ENCODE measurements at regions of chr3 and their contacts with region 1.

Region 1: GRCh38 chr3:13895155-13896105 is 15.6 kb upstream of the WNT7A start:
- DNase-seq: peak; percentile 69
- ATAC-seq: peak; percentile 98
- H3K4me3 ChIP-seq: peak overlapping the region; percentile 20 to 72 (median 57)
- H3K27ac ChIP-seq: no peak overlapping the region
- H3K4me1 ChIP-seq: peaks cover 10% of the 10 kb centered on the region
- H3K27me3 ChIP-seq: peaks cover 0 to 25% of the 10 kb centered on the region in 2 experiments; a peak in 3 of 5 replicates
- CTCF ChIP-seq: no peak
- EP300 ChIP-seq: no peak
- POLR2A ChIP-seq: no peak
- RAD21 ChIP-seq: no peak

Region 2: GRCh38 chr3:14031271-14031670 is 135.8 kb after region 1 on chr3:
- CTCF ChIA-PET with region 1: no interaction called
- POLR2A ChIA-PET with region 1: no interaction called
- in situ Hi-C with region 1: no loop called
- intact Hi-C with region 1: no loop called
- DNase-seq: no peak
- ATAC-seq: no peak; the same call in 2 of the 3 replicates
- H3K4me3 ChIP-seq: no peak overlapping the region
- H3K27ac ChIP-seq: no peak overlapping the region
- H3K4me1 ChIP-seq: no peaks in the 10 kb centered on the region
- H3K27me3 ChIP-seq: peaks cover 0 to 4% of the 10 kb centered on the region in 2 experiments; a peak in 2 of 5 replicates
- CTCF ChIP-seq: no peak
- EP300 ChIP-seq: no peak
- POLR2A ChIP-seq: no peak
- RAD21 ChIP-seq: no peak

Region 3: GRCh38 chr3:14113965-14114635 is 218.7 kb after region 1 on chr3:
- CTCF ChIA-PET with region 1: interaction called, 8 read pairs
- POLR2A ChIA-PET with region 1: interaction called, 5 read pairs
- in situ Hi-C with region 1: loop called (anchors 5 kb)
- intact Hi-C with region 1: loop called (anchors 1 kb)
- DNase-seq: peak; percentile 47
- ATAC-seq: peak; percentile 72
- H3K4me3 ChIP-seq: no peak overlapping the region
- H3K27ac ChIP-seq: peak overlapping the region; percentile 44
- H3K4me1 ChIP-seq: peaks cover 40% of the 10 kb centered on the region
- H3K27me3 ChIP-seq: no peaks in the 10 kb centered on the region
- CTCF ChIP-seq: peak; percentile 77
- EP300 ChIP-seq: no peak
- POLR2A ChIP-seq: no peak
- RAD21 ChIP-seq: peak; percentile 53; the same call in 1 of the 2 replicates

Region 4: GRCh38 chr3:14461748-14462324 is 566.4 kb after region 1 on chr3:
- CTCF ChIA-PET with region 1: no interaction called
- POLR2A ChIA-PET with region 1: no interaction called
- in situ Hi-C with region 1: loop called (anchors 10 kb)
- intact Hi-C with region 1: no loop called
- DNase-seq: peak; percentile 50
- ATAC-seq: peak; percentile 92
- H3K4me3 ChIP-seq: no peak overlapping the region
- H3K27ac ChIP-seq: no peak overlapping the region
- H3K4me1 ChIP-seq: no peaks in the 10 kb centered on the region
- H3K27me3 ChIP-seq: no peaks in the 10 kb centered on the region
- CTCF ChIP-seq: peak; percentile 87
- EP300 ChIP-seq: no peak
- POLR2A ChIP-seq: no peak
- RAD21 ChIP-seq: peak; percentile 94